ENCODE measurements at regions of chr2 and their contacts with region 1.

Region 1: GRCh38 chr2:218269899-218270720 is at the starts of genes AAMP and PNKD:
- DNase-seq: peak; percentile 100
- H3K4me3 ChIP-seq: peak within 1 kb of the TSS; percentile 76 to 90 (median 87)
- H3K27ac ChIP-seq: peak within 1 kb of the TSS; percentile 86 to 89
- H3K4me1 ChIP-seq: peaks cover 8 to 19% of the 10 kb centered on the region in 2 donors
- H3K27me3 ChIP-seq: no peaks in the 10 kb centered on the region
- CTCF ChIP-seq: peak; percentile 14 to 19 (median 17)
- POLR2A ChIP-seq: peak; percentile 74
- total RNA-seq, gene AAMP: 150 to 164 (median 151) TPM
- total RNA-seq, gene PNKD: 30.2 to 48.3 (median 35.6) TPM

Region 2: GRCh38 chr2:218401890-218402289 is 131.8 kb after region 1 on chr2:
- intact Hi-C with region 1: loop called (anchors 2 kb)
- DNase-seq: no peak
- H3K4me3 ChIP-seq: peak overlapping the region; percentile 97 to 100 (median 98)
- H3K27ac ChIP-seq: peak overlapping the region; percentile 97 to 99
- H3K4me1 ChIP-seq: peaks cover 17 to 21% of the 10 kb centered on the region in 2 donors
- H3K27me3 ChIP-seq: no peaks in the 10 kb centered on the region
- CTCF ChIP-seq: no peak
- POLR2A ChIP-seq: no peak

Region 3: GRCh38 chr2:218885981-218886947 is 616.2 kb after region 1 on chr2:
- intact Hi-C with region 1: no loop called
- DNase-seq: no peak
- H3K4me3 ChIP-seq: no peak overlapping the region
- H3K27ac ChIP-seq: no peak overlapping the region
- H3K4me1 ChIP-seq: no peaks in the 10 kb centered on the region
- H3K27me3 ChIP-seq: no peaks in the 10 kb centered on the region
- CTCF ChIP-seq: no peak
- POLR2A ChIP-seq: no peak